ENCODE measurements at regions of chrX and their contacts with region 1.

Region 1: GRCh38 chrX:110412971-110413721 is 54.5 kb downstream of the RTL9 start:
- DNase-seq: peak; percentile 67
- ATAC-seq: peak; percentile 87
- H3K4me3 Mint-ChIP-seq: no peak overlapping the region
- H3K27ac Mint-ChIP-seq: no peak overlapping the region
- H3K4me1 Mint-ChIP-seq: peaks cover 14% of the 10 kb centered on the region
- H3K27me3 Mint-ChIP-seq: peaks cover 4% of the 10 kb centered on the region

Region 2: GRCh38 chrX:110167952-110168451 is 245.1 kb before region 1 on chrX:
- CTCF ChIA-PET with region 1: interaction called, 271 read pairs
- DNase-seq: peak; percentile 51
- ATAC-seq: peak; percentile 45
- H3K4me3 Mint-ChIP-seq: no peak overlapping the region
- H3K27ac Mint-ChIP-seq: no peak overlapping the region
- H3K4me1 Mint-ChIP-seq: no peaks in the 10 kb centered on the region
- H3K27me3 Mint-ChIP-seq: no peaks in the 10 kb centered on the region

Region 3: GRCh38 chrX:110806145-110806544 is 393.0 kb after region 1 on chrX:
- CTCF ChIA-PET with region 1: no interaction called
- DNase-seq: no peak
- ATAC-seq: no peak
- H3K4me3 Mint-ChIP-seq: no peak overlapping the region
- H3K27ac Mint-ChIP-seq: no peak overlapping the region
- H3K4me1 Mint-ChIP-seq: no peaks in the 10 kb centered on the region
- H3K27me3 Mint-ChIP-seq: no peaks in the 10 kb centered on the region

Measured in activated CD8-positive, alpha-beta memory T cell treated with anti-CD3 and anti-CD28 coated beads, Interleukin-2, amount 10 ng/mL, durations not matched to agents 7 days and 5 days (primary cell).